Activated B cell treated with CpG ODN at 0.5 μM for 24 hours (primary cell): ENCODE measurements at regions of chrX and their contacts with region 1.

Region 1: DNA sequence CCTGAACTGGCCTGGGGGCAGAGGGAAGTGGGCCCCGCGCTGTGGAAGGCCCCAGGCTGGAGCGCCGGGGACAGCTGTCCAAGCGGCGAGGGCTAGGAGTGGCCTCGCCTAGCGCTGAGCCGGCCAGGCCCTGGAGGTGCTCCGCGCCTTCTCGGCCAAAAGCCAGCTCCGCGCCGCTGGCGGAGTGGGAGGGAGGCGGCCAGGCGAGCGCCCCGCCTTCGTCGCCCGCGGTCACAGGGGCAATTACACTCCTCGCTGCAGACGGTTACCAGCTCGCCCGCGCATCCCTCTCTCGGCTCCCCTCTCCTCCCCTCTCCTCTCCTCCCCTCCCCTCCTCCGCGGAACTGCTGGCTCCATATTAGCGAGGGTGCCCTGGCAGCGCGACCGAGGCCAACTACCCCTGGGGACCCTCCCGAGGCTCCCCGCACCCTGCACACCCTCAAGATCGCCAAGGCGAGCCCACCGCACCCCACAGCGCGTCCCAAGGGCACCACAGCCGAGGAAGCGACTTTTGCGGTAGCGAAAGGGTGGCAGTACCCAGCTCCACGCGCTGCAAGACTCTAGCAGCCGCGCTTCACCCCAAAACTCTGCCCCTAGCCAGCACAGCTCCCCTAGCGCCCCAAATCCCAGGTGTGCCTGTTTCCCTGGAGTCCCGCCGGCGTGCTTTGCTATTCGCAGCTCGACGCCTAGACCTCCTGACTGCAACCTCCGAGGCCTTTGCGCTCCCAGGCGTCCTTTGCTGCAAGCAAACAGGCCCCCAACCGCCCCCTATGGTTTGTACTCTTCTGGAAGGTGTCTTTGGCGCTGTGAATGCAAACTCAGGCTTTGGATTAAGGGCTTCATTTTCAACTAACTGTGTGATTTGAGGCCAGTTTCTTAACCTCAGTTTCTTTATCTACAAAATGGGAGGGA is 91.4 kb downstream of the BCOR start:
- DNase-seq: no peak
- ATAC-seq: peak; percentile 33
- H3K4me3 Mint-ChIP-seq: peak overlapping the region; percentile 32
- H3K27ac Mint-ChIP-seq: no peak overlapping the region
- H3K4me1 Mint-ChIP-seq: peaks cover 31% of the 10 kb centered on the region
- H3K27me3 Mint-ChIP-seq: peaks cover 14% of the 10 kb centered on the region
- CTCF ChIP-seq: no peak

Region 2: GRCh38 chrX:39730662-39731397 is 275.5 kb before region 1 on chrX:
- CTCF ChIA-PET with region 1: no interaction called
- POLR2A ChIA-PET with region 1: no interaction called
- intact Hi-C with region 1: loop called (anchors 5 kb)
- DNase-seq: no peak
- ATAC-seq: peak; percentile 64
- H3K4me3 Mint-ChIP-seq: peak overlapping the region; percentile 53
- H3K27ac Mint-ChIP-seq: no peak overlapping the region
- H3K4me1 Mint-ChIP-seq: peaks cover 5% of the 10 kb centered on the region
- H3K27me3 Mint-ChIP-seq: peaks cover 8% of the 10 kb centered on the region
- CTCF ChIP-seq: no peak

Region 3: DNA sequence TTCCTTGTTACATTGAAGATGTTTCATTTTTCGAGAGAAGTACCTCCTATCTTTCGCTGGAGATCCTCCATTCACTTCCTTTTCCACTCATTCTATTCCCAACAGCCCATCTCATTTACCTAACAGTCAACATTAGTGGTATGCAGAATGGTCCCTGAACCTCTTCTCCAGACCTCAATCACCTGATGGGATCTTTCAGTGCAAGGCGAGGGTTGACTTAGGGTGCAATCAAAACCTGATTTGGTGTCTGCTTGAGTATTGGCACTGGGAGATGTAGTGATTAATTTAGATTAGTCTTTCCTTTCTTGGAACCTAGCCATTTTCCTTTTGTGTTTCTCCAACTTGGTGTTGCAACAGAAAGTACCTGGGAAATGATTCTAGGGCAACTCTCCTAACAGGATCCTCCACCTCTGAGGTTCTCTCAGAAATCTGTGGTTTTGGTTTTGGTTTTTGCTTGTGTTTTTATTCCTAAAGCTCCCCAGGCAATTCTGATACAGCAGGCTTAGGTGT is 1346.0 kb after region 1 on chrX:
- CTCF ChIA-PET with region 1: no interaction called
- POLR2A ChIA-PET with region 1: no interaction called
- intact Hi-C with region 1: no loop called
- DNase-seq: no peak
- ATAC-seq: no peak
- H3K4me3 Mint-ChIP-seq: no peak overlapping the region
- H3K27ac Mint-ChIP-seq: peak overlapping the region; percentile 3
- H3K4me1 Mint-ChIP-seq: peaks cover 13% of the 10 kb centered on the region
- H3K27me3 Mint-ChIP-seq: no peaks in the 10 kb centered on the region
- CTCF ChIP-seq: no peak